AG04449 (cell line): ENCODE measurements at regions of chr10 and their contacts with region 1.

Region 1: DNA sequence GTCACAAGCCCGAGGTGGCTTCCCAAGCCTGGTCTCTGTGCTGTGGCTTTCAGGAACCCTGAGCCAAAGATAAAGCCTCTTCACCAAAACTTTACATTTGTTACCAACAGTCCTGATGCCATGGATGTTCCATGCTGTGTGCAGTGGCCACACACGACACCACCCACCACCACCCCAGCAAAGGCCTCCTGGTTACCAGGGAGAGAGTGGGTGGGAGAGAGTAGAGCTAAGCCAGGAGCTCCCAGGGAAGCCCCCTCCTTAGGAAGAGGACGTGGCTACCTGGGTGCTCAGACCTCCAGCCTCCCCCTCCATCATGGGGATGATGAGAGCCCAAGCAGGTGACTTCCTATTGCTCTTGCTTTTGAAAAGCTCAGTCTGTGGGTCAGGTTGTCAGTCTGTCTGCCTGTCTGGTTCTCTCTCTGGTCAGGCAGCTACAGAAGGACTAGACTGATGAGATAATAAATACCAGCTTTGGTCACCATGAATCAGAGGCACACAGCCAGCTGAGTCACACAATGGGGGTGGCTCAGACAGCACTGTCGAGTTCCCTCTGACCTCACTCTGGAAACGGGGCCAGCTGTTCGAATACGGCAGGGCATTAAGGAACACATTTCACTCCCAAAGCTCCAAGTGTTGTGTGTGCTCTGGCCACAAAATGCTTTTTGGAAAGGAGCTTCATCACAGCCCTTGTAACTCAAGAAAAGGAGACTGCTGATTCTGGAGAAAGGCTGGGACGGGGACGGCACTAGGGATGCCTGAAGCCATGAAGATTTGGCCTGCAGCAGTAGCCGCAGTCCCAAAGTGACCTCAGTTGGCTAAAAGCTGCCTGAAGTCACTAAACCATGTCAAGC is 166.0 kb downstream of the FANK1 start:
- DNase-seq: peak; percentile 96
- H3K4me3 ChIP-seq: no peak overlapping the region
- CTCF ChIP-seq: no peak

Region 2: DNA sequence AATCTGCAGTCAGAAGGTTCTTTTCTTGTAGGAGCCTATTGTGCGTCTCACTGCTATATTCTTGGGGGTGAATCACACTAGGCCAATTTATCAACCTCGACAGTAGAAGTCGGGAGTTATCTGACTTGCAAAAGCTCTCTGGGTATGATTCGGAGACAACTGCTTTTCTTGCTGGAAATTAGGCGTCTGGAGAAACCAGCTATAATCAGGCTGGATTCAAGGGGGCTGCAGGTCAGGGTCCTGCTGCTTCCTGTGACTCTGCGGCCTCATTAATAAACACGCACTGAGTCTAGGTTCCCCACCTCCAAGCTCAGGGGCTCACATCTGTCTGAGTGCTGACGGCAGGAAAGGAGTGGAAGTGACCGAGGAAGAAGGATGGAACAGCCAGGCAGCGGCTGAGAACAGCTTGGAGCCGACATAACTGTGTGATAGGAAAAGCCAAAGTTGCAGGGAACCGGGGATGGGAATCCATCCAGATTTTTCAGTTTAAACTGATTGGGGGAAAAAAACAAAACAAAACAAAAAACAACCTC is 18.6 kb after region 1 on chr10:
- CTCF ChIA-PET with region 1: interaction called, 3 read pairs
- POLR2A ChIA-PET with region 1: interaction called, 22 read pairs
- DNase-seq: peak; percentile 67
- H3K4me3 ChIP-seq: peak overlapping the region; percentile 15; the same call in 1 of the 2 replicates
- CTCF ChIP-seq: no peak